Activated CD4-positive, alpha-beta memory T cell treated with anti-CD3 and anti-CD28 coated beads, Interleukin-2, amount 10 ng/mL, durations not matched to agents 7 days and 5 days (primary cell): ENCODE measurements at regions of chr17 and their contacts with region 1.

Region 1: DNA sequence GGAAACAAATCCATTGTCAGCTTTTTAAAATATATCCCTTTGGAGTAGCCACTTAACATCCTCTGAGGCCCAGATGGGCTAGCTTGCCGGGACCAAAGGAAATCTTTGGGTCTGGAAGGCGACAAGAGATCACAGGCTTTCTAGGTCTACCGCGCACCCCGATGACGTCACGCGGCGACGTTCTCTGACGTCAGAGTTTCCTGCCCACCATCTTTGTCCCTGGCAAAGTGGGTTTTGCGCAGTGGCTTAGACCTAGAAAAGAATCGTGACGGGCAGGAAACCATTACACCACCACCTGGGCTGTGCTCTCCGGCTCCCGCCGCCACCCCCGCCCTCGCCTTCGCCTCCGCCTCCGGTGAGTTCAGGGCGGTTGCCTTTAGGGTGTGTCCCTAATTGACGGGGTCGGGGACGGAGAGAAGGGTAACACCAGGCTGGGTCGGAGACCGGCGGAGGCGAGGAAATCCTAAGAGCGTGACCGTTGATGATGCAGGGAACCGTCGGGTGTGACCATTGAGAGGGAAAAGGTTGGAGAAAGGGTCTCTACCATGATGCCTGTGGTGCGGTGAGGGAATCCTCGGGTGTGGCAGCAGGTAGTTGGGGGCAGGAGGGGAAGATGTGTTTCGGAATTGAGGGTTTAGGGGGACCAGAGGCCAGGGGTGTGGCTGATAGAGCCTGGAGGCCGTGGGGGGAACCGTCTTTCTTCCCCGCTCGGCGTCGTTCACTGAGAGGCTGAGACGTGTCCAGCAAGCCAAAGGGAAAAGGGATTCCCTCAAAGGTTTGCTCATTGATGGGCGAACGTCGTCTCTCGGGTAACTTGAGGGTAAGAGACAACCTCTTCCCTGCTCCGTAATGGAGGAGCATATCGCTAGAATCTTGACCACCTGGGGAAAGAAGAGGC is at the start of gene AP2B1:
- DNase-seq: peak; percentile 98
- H3K4me3 Mint-ChIP-seq: peak within 1 kb of the TSS; percentile 96
- H3K27ac Mint-ChIP-seq: peak within 1 kb of the TSS; percentile 97
- H3K4me1 Mint-ChIP-seq: peaks cover 38% of the 10 kb centered on the region
- H3K27me3 Mint-ChIP-seq: peaks cover 11% of the 10 kb centered on the region
- total RNA-seq, gene AP2B1: 196 to 203 TPM

Region 2: GRCh38 chr17:35568541-35568940 is 18.8 kb before region 1 on chr17:
- CTCF ChIA-PET with region 1: interaction called, 3 read pairs
- POLR2A ChIA-PET with region 1: interaction called, 16 read pairs
- DNase-seq: peak; percentile 39
- H3K4me3 Mint-ChIP-seq: peak overlapping the region; percentile 76
- H3K27ac Mint-ChIP-seq: peak overlapping the region; percentile 78
- H3K4me1 Mint-ChIP-seq: peaks cover 28% of the 10 kb centered on the region
- H3K27me3 Mint-ChIP-seq: peaks cover 11% of the 10 kb centered on the region

Region 3: GRCh38 chr17:35612924-35613521 is 25.7 kb after region 1 on chr17:
- CTCF ChIA-PET with region 1: interaction called, 16 read pairs
- POLR2A ChIA-PET with region 1: interaction called, 4 read pairs
- DNase-seq: peak; percentile 45
- H3K4me3 Mint-ChIP-seq: no peak overlapping the region
- H3K27ac Mint-ChIP-seq: no peak overlapping the region
- H3K4me1 Mint-ChIP-seq: no peaks in the 10 kb centered on the region
- H3K27me3 Mint-ChIP-seq: no peaks in the 10 kb centered on the region

Region 4: GRCh38 chr17:35740997-35741931 is 153.9 kb after region 1 on chr17:
- CTCF ChIA-PET with region 1: no interaction called
- POLR2A ChIA-PET with region 1: no interaction called
- DNase-seq: peak; percentile 29
- H3K4me3 Mint-ChIP-seq: no peak overlapping the region
- H3K27ac Mint-ChIP-seq: no peak overlapping the region
- H3K4me1 Mint-ChIP-seq: peaks cover 6% of the 10 kb centered on the region
- H3K27me3 Mint-ChIP-seq: peaks cover 38% of the 10 kb centered on the region